Motor neuron (in vitro differentiated cells): ENCODE measurements at regions of chr7 and their contacts with region 1.

Region 1: DNA sequence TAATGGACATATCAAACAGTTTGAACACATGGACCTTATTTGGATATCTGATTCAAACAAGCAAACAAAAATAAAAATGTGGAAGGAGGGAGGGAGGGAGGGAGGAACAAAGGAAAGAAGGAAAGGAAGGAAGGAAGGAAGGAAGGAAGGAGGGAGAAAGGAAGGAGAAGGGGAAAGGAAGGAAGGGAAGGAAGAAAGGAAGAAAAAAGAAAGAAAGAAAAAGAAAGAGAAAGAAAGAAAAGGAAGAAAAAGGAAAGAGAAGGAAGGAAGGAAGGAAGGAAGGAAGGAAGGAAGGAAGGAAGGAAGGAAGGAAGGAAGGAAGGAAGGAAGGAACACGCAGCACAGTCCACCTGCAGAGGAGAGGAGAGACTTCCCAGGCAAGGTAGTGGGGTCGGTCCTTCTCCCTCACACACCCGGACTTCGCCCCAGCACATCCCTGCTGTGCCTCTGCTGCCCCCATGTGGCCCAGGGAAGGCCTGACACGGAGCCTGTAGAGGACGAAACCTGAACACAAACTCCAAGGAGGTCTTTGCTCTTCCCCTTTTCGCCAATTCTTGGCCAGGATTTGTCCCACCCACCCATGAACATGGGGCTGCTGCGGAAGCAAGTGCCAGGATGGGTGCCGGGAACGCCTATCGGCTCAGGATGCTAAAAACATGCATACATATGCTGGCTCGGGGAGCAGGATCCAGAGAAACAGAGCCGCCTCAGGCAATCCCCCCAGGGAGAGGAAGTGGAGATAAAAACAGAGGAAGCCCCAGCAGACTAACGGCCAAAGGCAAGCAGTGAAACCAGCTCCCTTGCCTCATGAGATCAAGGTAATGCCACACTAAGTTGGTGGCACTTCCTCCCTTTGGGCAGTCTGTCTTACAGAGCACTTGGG is 52.3 kb upstream of the DGKI start:
- ATAC-seq: peak; percentile 93 to 99 (median 98)
- H3K4me3 ChIP-seq: no peak overlapping the region
- H3K27ac ChIP-seq: no peak overlapping the region
- H3K4me1 ChIP-seq: peaks cover 0 to 5% of the 10 kb centered on the region in 2 donors

Region 2: GRCh38 chr7:137626469-137627067 is 272.5 kb before region 1 on chr7:
- in situ Hi-C with region 1: no loop called
- ATAC-seq: peak in 6 of 8 experiments; percentile 32 to 92 (median 80)
- H3K4me3 ChIP-seq: no peak overlapping the region
- H3K27ac ChIP-seq: no peak overlapping the region
- H3K4me1 ChIP-seq: no peaks in the 10 kb centered on the region

Region 3: DNA sequence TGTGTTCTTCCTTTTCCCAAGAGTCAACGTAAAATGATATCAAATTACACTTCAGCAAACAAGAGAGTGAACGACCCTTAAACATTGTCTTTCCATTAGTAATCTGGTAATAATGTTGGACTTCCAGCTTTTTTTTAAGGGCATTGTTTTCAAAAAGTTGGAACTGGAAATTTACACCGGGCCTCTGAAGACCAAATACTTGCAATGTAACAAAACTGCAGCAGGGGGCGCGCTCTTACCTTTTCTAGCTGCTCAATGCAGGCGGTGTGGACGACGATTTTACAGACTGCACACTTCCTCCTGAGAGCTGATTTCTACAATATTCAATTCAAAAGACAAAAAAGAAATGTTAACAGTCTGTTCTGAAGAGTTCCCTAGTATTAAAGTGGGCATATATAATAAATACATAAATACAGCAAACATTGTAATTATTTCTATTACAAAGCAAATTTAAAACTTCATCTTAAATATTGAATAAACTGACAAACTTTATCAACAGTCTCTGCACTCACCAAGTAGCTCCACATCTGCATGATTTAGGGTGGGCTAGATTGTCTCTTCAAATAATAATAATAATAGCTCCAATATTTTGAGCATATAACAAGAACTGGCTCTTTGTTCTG is 242.7 kb before region 1 on chr7:
- in situ Hi-C with region 1: loop called in 7 of 9 experiments (anchors 10 to 25 kb)
- ATAC-seq: peak in 7 of 8 experiments; percentile 53 to 77 (median 69)
- H3K4me3 ChIP-seq: no peak overlapping the region
- H3K27ac ChIP-seq: no peak overlapping the region
- H3K4me1 ChIP-seq: peaks cover 4 to 14% of the 10 kb centered on the region in 2 donors

Region 4: DNA sequence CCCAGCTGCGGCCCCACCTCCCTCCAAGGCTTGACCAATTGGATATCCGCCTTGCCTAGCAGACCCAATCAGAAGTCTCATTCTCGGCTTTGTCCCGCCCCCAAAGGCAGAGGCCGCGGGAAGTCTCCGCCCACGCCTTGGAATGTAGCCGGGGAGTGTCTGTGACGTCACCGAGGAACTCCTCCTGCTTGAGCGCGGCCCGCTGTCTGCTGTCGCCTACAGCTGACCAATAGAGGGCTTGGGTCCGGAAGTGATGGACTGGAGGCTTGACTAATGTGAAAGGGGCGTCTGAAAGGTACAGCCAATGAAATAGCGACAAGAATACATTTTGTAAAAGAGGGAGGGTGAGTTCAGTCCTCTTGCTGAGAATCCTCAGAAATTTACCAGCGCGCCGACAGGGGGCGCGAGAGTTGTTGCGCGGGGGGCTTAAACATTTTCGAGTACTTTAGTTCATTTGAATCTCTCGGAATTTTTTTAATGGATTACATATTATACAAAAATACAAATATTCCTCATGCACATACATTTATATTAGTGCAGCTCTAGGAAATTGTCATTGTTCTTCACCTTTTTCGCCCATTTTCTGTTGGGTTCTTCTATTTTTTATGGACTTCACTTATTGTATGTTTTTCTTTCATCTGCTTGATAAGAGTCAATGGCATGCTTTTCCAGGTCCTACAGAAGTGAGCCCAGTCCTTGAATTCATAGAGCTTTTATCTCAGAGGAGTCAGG is 103.2 kb after region 1 on chr7:
- in situ Hi-C with region 1: loop called in 4 of 9 experiments (anchors 10 to 25 kb)
- ATAC-seq: peak; percentile 86 to 94 (median 93)
- H3K4me3 ChIP-seq: peak overlapping the region; percentile 50 to 68 (median 61)
- H3K27ac ChIP-seq: no peak overlapping the region
- H3K4me1 ChIP-seq: peaks cover 14 to 18% of the 10 kb centered on the region in 2 donors

Region 5: DNA sequence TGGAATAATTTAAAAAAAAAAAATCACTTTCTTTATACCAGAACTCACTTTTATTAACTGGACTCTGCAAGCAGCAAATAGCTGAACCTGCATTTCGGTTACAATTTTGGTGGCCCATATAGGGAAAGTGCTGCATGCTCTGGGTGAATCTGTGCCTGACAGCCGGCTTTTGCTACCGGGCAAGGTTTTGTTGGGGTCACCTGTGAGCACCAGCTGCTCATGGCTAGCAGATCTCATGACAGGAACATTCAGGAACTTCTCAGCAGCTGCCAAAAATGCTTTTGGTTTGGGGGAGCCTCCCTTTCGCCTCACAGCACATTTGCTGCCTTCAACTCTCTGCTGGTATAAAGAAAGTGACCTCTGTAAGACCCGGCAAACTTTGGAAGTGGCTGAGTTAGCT is 116.0 kb after region 1 on chr7:
- in situ Hi-C with region 1: loop called in 3 of 9 experiments (anchors 10 to 25 kb)
- ATAC-seq: no peak
- H3K4me3 ChIP-seq: no peak overlapping the region
- H3K27ac ChIP-seq: no peak overlapping the region
- H3K4me1 ChIP-seq: no peaks in the 10 kb centered on the region

Region 6: DNA sequence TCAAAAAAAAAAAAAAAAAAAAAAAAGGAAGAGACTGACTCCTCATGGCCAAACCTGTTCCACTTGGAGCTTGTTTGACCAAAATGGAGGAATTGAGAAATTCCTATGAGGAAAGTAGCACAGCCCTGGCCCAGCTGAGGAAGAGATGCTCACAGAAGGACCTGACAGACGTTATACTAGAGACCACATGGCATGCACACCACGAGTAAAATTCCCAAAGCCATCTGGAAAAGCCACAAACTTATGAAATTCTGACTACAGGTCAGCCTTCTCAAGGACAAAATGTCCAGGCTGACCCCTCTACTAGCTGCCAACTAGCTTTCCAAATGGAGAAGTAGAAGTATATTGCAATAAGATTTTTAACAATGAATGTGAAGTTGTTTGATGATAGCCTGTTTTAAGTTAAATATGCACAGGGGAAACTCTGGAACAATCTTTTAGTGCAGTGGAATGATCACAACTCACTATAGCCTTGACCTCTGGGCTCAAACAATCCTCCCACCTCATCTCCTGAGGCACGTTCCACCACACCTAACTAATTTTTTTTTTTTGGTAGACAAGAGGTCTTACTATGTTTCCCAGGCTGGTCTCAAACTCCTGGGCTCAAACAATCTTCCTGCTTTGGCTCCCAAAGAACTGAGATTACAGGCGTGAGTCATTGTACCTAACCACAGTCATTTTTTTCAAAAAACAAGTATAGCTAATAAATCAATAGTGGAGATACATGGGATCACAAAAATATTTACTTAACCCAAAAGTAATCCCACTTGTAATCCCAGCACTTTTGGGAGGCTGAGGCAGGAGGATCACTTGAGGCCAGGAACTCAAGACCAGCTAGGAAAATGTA is 252.9 kb after region 1 on chr7:
- in situ Hi-C with region 1: no loop called
- ATAC-seq: no peak
- H3K4me3 ChIP-seq: no peak overlapping the region
- H3K27ac ChIP-seq: no peak overlapping the region
- H3K4me1 ChIP-seq: peaks cover 0 to 5% of the 10 kb centered on the region in 2 donors

Region 7: GRCh38 chr7:138738551-138739335 is 839.7 kb after region 1 on chr7:
- in situ Hi-C with region 1: loop called in 3 of 9 experiments (anchors 25 kb)
- ATAC-seq: peak; percentile 86 to 99 (median 96)
- H3K4me3 ChIP-seq: no peak overlapping the region
- H3K27ac ChIP-seq: no peak overlapping the region
- H3K4me1 ChIP-seq: peaks cover 0 to 3% of the 10 kb centered on the region in 2 donors